Calu3 (cell line): ENCODE measurements at regions of chrX and their contacts with region 1.

Region 1: DNA sequence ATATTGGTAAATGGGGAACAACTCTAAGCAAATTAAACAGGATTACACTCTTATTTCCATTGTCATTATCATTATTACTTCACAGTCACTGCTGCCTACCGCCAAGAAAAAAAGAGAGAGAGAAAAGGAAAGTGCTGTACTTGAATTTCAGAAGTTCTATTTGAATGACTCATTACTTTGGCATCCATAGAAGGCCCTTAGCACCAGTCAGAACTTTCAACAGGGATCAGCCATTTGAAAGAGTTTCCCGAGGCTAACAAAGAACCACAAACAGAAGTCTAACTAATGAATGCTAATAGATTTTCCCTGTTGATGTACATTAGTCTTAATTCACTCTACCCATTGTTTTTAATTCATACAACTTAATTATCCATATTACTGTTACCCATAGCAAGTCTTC is 116.3 kb downstream of the SHROOM4 start:
- DNase-seq: no peak
- H3K4me3 Mint-ChIP-seq: no peak overlapping the region
- H3K27ac Mint-ChIP-seq: peak overlapping the region; percentile 77
- H3K4me1 Mint-ChIP-seq: peaks cover 21% of the 10 kb centered on the region
- H3K27me3 Mint-ChIP-seq: no peaks in the 10 kb centered on the region
- CTCF ChIP-seq: no peak

Region 2: DNA sequence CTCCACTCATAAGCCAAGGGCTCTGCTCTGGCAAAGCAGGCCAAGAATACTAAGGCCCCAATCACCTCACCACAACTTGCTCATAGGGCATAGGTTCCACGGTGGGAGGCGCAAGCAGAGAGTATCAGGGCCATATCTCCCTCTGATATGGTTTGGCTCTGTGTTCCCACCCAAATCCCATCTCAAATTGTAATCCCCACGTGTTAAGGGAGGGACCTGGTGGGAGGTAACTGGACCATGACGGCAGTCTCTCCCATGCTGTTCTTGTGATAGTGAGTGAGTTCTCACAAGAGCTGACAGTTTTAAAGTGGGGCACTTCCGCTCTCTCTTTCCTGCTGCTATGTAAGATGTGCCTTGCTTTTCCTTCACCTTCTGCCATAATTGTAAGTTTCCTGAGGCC is 27.6 kb after region 1 on chrX:
- CTCF ChIA-PET with region 1: no interaction called
- intact Hi-C with region 1: loop called (anchors 1 kb)
- DNase-seq: no peak
- H3K4me3 Mint-ChIP-seq: no peak overlapping the region
- H3K27ac Mint-ChIP-seq: no peak overlapping the region
- H3K4me1 Mint-ChIP-seq: peaks cover 24% of the 10 kb centered on the region
- H3K27me3 Mint-ChIP-seq: no peaks in the 10 kb centered on the region
- CTCF ChIP-seq: no peak